BJ (cell line): ENCODE measurements at regions of chr3 and their contacts with region 1.

Region 1: DNA sequence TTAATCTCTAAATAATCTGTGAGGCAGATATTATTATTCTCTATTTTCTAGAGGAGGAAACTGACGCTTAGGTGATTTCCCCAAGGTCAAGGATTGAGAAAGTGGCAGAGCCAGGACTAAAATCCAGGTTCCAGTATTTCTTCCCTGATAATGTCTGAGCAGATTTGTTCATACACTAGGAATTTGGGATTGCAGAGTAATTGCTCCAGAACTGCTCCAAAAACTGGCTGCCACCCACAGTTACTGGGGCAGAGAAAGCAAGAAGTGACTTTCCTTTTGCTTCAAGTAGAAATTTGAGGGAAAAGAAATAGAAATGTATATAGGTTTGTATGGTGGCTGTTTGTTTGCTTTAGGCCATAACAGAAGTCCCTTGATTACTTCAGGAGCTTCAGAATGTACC is 60.6 kb downstream of the SLC12A8 start:
- DNase-seq: no peak
- H3K4me3 ChIP-seq: no peak overlapping the region
- H3K27me3 ChIP-seq: no peaks in the 10 kb centered on the region
- CTCF ChIP-seq: no peak

Region 2: DNA sequence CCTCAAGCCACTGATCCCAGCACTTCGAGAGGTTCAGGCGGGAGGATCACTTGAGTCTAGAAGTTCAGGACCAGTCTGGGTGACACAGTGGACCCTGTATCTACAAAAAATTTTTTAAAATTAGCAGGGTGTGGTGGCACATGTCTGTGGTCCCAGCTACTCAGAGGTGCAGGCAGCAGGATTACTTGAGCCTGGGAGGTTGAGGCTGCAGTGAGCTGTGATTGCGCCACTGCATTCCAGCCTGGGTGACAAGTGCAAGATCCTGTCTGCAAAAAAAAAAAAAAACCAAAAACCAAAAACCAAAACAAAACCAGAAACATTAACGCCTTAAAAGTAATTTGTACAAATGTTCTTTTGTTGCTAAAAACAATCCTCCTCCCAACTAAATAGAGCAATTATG is 88.6 kb after region 1 on chr3:
- CTCF ChIA-PET with region 1: no interaction called
- POLR2A ChIA-PET with region 1: no interaction called
- DNase-seq: no peak
- H3K4me3 ChIP-seq: no peak overlapping the region
- H3K27me3 ChIP-seq: no peaks in the 10 kb centered on the region
- CTCF ChIP-seq: no peak

Region 3: GRCh38 chr3:125556314-125556713 is 404.4 kb after region 1 on chr3:
- CTCF ChIA-PET with region 1: no interaction called
- POLR2A ChIA-PET with region 1: interaction called, 21 read pairs
- DNase-seq: no peak
- H3K4me3 ChIP-seq: no peak overlapping the region
- H3K27me3 ChIP-seq: no peaks in the 10 kb centered on the region
- CTCF ChIP-seq: no peak